WTC11 (cell line): ENCODE measurements at regions of chr4 and their contacts with region 1.

Region 1: GRCh38 chr4:103091601-103092223 is 7.9 kb downstream of the BDH2 start:
- DNase-seq: no peak
- ATAC-seq: peak; percentile 81
- H3K4me3 Mint-ChIP-seq: no peak overlapping the region
- H3K27ac Mint-ChIP-seq: no peak overlapping the region
- H3K4me1 Mint-ChIP-seq: no peaks in the 10 kb centered on the region
- H3K27me3 Mint-ChIP-seq: no peaks in the 10 kb centered on the region
- CTCF ChIP-seq: peak; percentile 26; the same call in 1 of the 2 replicates

Region 2: GRCh38 chr4:103046416-103047290 is 45.1 kb before region 1 on chr4:
- CTCF ChIA-PET with region 1: interaction called, 11 read pairs
- POLR2A ChIA-PET with region 1: no interaction called
- DNase-seq: peak; percentile 37
- ATAC-seq: peak; percentile 99
- H3K4me3 Mint-ChIP-seq: no peak overlapping the region
- H3K27ac Mint-ChIP-seq: no peak overlapping the region
- H3K4me1 Mint-ChIP-seq: peaks cover 6% of the 10 kb centered on the region
- H3K27me3 Mint-ChIP-seq: no peaks in the 10 kb centered on the region
- CTCF ChIP-seq: peak; percentile 57